Activated CD4-positive, alpha-beta T cell treated with anti-CD3 and anti-CD28 coated beads for 36 hours (primary cell): ENCODE measurements at regions of chr18 and their contacts with region 1.

Region 1: DNA sequence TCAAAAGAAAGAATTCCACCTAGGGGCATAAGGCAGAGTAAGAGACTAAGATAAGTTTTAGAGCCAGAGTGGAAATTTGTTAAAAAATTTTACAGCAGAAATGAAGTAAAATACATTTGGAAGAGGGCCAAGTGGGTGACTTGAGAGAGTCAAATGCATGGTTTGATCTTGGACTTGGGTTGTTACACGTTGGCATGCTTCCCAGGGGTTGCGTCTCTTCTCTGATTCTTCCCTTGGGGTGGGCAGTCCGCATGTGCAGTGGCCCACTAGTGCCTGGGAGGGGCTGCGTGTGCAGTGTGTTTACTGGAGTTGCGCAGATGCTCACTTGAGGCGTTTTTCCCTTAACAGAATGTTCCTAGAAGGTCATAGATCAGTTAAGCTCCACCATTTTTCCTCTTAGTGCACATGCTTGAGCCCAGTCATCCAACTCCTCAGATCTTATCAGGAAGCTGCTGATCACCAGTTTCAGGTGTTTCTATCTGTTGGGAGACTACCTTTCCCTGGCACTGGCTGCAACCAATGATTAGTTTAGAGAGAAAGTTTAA is 13.1 kb downstream of the SEH1L start:
- DNase-seq: no peak
- ATAC-seq: no peak
- H3K4me3 Mint-ChIP-seq: no peak overlapping the region
- H3K27ac Mint-ChIP-seq: no peak overlapping the region
- H3K4me1 Mint-ChIP-seq: peaks cover 6% of the 10 kb centered on the region
- H3K27me3 Mint-ChIP-seq: no peaks in the 10 kb centered on the region

Region 2: DNA sequence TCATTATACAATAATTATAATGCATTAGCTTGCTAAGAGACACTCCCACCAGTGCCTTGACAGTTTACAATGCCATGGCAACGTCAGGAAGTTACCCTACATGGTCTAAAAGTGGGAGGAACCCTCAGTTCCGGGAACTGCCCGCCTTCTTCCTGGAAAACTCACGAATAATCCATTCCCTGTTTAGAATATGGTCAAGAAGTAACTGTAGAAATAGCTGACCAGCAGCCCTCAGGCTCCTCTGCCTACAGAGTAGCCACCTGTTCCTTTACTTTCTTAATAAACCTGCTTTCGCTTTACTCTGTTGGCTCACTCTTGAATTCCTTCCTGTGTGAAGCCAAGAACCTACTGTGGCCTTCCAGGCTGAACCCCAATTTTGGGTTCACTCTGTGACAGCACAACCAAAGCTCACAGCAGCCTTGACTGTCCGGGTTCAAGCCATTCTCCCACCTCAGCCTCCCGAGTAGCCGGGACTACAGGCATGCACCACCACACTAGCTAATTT is 56.9 kb before region 1 on chr18:
- CTCF ChIA-PET with region 1: no interaction called
- POLR2A ChIA-PET with region 1: no interaction called
- intact Hi-C with region 1: no loop called
- DNase-seq: peak; percentile 70
- ATAC-seq: peak; percentile 55
- H3K4me3 Mint-ChIP-seq: peak overlapping the region; percentile 8
- H3K27ac Mint-ChIP-seq: peak overlapping the region; percentile 20
- H3K4me1 Mint-ChIP-seq: peaks cover 6% of the 10 kb centered on the region
- H3K27me3 Mint-ChIP-seq: peaks cover 5% of the 10 kb centered on the region

Region 3: GRCh38 chr18:13107074-13107473 is 146.1 kb after region 1 on chr18:
- CTCF ChIA-PET with region 1: no interaction called
- POLR2A ChIA-PET with region 1: no interaction called
- intact Hi-C with region 1: loop called in 1 of 2 experiments (anchors 5 kb)
- DNase-seq: no peak
- ATAC-seq: no peak
- H3K4me3 Mint-ChIP-seq: no peak overlapping the region
- H3K27ac Mint-ChIP-seq: no peak overlapping the region
- H3K4me1 Mint-ChIP-seq: no peaks in the 10 kb centered on the region
- H3K27me3 Mint-ChIP-seq: no peaks in the 10 kb centered on the region